ENCODE measurements at regions of chr17 and their contacts with region 1.

Region 1: GRCh38 chr17:3474212-3474611 is 1.6 kb upstream of the ASPA start:
- DNase-seq: no peak
- H3K4me3 ChIP-seq: no peak overlapping the region
- H3K27ac ChIP-seq: peak overlapping the region in 3 of 4 donors; percentile 8 to 61 (median 61)
- H3K4me1 ChIP-seq: no peaks in the 10 kb centered on the region
- H3K27me3 ChIP-seq: no peaks in the 10 kb centered on the region
- CTCF ChIP-seq: no peak
- EP300 ChIP-seq: no peak
- POLR2A ChIP-seq: no peak

Region 2: GRCh38 chr17:3535253-3535995 is 61.2 kb after region 1 on chr17:
- intact Hi-C with region 1: loop called (anchors 10 kb)
- DNase-seq: no peak
- H3K4me3 ChIP-seq: peak overlapping the region in 3 of 4 donors; percentile 31 to 39 (median 35)
- H3K27ac ChIP-seq: peak overlapping the region; percentile 29 to 66 (median 48)
- H3K4me1 ChIP-seq: peaks cover 0 to 7% (median 4%) of the 10 kb centered on the region in 4 donors
- H3K27me3 ChIP-seq: peaks cover 2 to 30% (median 14%) of the 10 kb centered on the region in 3 donors
- CTCF ChIP-seq: peak in 2 of 4 experiments; percentile 33 to 37
- EP300 ChIP-seq: no peak
- POLR2A ChIP-seq: no peak

Region 3: DNA sequence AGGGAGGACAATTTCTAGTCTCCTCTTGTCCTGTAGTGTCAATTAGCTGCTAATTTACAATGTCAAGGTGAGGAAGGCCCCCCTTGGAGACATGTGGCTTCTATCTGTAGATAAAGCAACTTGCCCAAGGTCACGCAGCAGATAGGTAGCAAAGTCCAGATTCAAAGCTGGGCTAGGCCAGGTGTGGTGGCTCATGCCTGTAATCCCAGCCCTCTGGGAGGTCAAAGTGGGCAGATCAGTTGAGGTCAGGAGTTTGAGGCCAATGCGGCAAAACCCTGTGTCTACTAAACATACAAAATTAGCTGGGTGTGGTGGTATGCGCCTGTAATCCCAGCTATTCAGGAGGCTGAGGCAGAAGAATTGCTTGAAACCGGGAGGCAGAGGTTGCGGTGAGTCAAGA is 72.3 kb after region 1 on chr17:
- intact Hi-C with region 1: no loop called
- DNase-seq: no peak
- H3K4me3 ChIP-seq: no peak overlapping the region
- H3K27ac ChIP-seq: no peak overlapping the region
- H3K4me1 ChIP-seq: no peaks in the 10 kb centered on the region
- H3K27me3 ChIP-seq: no peaks in the 10 kb centered on the region
- CTCF ChIP-seq: no peak
- EP300 ChIP-seq: no peak
- POLR2A ChIP-seq: no peak

Region 4: GRCh38 chr17:3610523-3610922 is 136.3 kb after region 1 on chr17:
- intact Hi-C with region 1: no loop called
- DNase-seq: no peak
- H3K4me3 ChIP-seq: no peak overlapping the region
- H3K27ac ChIP-seq: no peak overlapping the region
- H3K4me1 ChIP-seq: no peaks in the 10 kb centered on the region
- H3K27me3 ChIP-seq: no peaks in the 10 kb centered on the region
- CTCF ChIP-seq: no peak
- EP300 ChIP-seq: no peak
- POLR2A ChIP-seq: no peak

Region 5: DNA sequence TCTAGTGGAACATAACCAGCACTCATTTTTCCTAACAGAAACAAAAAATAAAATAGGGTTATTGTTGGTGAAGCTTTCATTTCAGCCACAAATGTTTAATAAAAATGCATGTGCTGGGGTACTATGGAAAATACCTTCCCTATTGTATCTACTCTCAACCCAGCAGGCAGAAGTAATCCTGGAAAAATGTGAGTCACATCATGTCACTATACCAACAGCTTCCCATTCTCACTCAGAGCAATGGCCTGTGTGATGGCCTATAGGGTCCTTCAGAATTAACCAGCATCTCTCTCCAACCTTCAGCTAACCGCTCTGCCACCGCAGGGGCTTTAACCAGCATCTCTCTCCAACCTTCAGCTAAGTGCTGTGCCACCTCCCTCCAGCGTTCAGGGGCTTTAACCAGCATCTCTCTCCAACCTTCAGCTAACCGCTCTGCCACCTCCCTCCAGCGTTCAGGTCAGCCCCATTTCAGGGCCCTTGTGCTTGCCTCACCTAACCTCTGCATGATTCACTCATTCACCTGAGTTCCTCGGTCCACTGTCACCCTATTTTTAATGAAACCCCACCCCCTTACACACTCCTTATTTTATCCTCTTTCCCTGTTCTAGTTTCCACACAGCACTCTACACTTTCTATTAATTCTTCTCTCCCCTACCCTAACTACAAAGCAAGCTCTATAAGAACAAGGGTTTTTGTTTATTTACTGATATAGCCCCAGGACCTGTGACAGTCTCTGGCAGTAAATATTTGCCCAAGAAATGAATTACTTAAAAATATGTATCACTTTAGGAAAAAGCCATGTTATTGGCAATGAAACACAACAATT is 858.3 kb after region 1 on chr17:
- intact Hi-C with region 1: no loop called
- DNase-seq: no peak
- H3K4me3 ChIP-seq: no peak overlapping the region
- H3K27ac ChIP-seq: peak overlapping the region in 3 of 4 donors; percentile 7 to 55 (median 46)
- H3K4me1 ChIP-seq: peaks cover 0 to 78% (median 62%) of the 10 kb centered on the region in 4 donors
- H3K27me3 ChIP-seq: no peaks in the 10 kb centered on the region
- CTCF ChIP-seq: no peak
- EP300 ChIP-seq: no peak
- POLR2A ChIP-seq: no peak